ENCODE measurements at regions of chr17 and their contacts with region 1.

Region 1: DNA sequence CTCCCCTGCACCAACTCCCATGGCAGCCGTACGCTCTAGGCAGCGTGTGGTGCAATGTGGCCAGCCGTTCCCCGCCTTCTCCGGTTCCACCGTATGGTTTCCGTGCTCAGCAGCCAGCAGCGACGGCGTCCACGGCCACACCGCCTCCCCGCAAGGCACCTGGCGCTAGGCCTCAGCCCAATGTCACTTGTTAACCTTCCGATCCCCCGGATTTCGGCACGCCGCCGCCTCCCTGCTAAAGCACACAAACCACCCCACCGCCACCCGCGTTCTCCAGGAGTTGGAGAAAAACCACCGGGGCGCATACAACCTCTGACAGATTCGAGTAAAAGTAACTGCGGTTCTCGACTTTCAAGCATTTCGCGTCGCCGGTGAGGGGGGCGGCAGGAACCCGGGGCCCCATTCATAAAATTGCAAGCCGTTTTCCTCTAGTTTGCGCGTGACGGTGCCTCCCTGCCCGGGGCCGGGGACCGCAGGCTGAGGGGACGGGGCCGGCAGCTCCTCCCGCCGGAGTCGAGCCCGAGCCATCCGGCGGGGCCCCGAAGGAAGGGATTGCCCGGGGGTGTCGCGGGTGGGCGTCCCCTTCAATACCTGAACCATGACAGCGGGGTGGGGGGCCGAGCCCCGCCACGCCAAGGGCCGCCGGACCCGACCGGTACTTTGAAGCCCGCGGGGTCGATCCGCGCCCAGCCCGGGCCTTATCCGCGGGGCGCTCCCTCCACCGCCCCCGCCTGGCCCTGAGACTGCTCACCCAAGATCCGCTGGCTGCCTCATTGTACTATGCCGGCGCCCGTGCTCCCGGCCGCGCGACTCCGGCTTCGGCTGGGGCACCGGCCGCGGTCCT is at the start of gene TEX2:
- DNase-seq: peak; percentile 69 to 71
- H3K4me3 ChIP-seq: peak within 1 kb of the TSS; percentile 75 to 98 (median 96)
- H3K27ac ChIP-seq: peak within 1 kb of the TSS; percentile 53 to 89 (median 88)
- H3K4me1 ChIP-seq: peaks cover 20 to 27% of the 10 kb centered on the region in 2 donors
- H3K27me3 ChIP-seq: no peaks in the 10 kb centered on the region
- CTCF ChIP-seq: no peak
- POLR2A ChIP-seq: peak; percentile 30 to 83
- total RNA-seq, gene TEX2: 63.9 to 101 (median 71.7) TPM

Region 2: GRCh38 chr17:64174686-64175456 is 87.8 kb before region 1 on chr17:
- intact Hi-C with region 1: loop called (anchors 2 kb)
- DNase-seq: peak; percentile 84 to 87
- H3K4me3 ChIP-seq: no peak overlapping the region
- H3K27ac ChIP-seq: peak overlapping the region; percentile 94 to 97 (median 96)
- H3K4me1 ChIP-seq: peaks cover 36 to 56% of the 10 kb centered on the region in 2 donors
- H3K27me3 ChIP-seq: no peaks in the 10 kb centered on the region
- CTCF ChIP-seq: no peak
- POLR2A ChIP-seq: peak in 1 of 2 donors; percentile 58

Measured in thyroid gland (tissue), 4 donors.